ENCODE measurements at regions of chr13 and their contacts with region 1.

Region 1: DNA sequence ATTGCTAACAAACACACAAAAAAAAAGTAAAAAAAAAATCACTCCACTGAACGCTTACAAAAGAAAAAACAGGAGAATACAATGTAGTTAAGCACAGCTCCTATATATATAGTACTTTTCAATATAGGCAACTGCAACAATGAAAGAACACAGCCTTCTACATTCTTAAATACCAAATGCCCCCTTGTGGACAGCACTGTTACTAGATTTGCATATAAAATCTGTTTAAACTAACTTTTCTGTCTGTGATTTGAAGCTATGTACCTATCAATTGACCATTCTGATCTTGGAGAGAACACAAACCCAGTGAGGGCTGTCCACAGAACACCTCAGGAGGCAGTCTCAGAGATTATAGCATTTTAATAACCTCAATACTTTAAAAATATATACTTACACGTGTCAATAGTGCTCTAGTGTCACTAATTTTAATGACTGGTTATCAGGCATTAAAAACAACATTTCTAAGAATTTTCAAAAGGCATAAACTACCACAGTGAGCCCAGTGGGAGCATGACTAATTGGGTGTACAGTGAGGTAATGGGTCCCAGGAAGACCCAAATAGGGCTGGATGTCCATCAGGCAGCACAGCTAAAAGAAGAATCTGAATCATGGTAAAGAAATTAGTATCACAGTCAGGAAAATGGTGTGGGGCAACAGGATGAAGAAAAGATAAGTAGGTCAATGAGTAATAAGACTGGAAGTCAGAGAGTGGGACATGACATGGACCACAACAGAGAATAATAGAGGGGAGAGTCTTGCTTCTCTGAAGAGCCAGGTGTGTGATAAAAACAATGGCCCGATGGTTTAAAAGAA is 22.2 kb downstream of the CCDC169 start:
- DNase-seq: no peak

Region 2: GRCh38 chr13:35978603-35979316 is 296.6 kb before region 1 on chr13:
- intact Hi-C with region 1: loop called (anchors 2 to 5 kb)
- DNase-seq: no peak

Region 3: GRCh38 chr13:35984776-35985453 is 290.5 kb before region 1 on chr13:
- intact Hi-C with region 1: loop called in 1 of 2 experiments (anchors 5 kb)
- DNase-seq: no peak

Region 4: DNA sequence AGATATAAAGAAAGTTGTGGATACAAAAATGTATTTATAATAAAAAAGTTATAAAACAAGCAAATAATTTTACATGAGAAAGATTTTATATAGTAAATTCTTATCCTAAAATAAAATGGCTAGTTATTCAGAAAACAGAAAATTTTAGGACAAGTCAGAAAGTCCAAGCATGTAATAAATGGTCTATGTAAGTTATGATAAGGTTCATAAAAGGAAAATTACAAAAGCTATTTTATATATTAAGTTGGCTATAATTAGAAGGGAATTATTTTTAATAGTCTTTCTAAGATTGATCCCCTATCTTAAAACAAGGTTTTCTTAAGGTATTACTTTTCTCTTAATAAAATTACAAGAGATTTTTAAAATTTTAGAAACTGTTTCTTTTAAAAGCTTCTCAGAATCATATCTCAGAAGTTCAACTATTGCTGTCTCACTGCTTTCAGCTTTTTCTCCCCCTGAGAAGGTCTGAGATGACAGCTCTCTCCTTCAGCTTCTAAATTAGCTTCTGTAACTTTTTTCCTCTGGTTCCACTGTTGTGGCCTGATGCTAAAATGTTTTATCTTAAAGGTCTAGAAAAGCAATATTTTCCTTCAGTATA is 13.5 kb after region 1 on chr13:
- intact Hi-C with region 1: no loop called
- DNase-seq: no peak

Region 5: GRCh38 chr13:36337938-36338641 is 62.7 kb after region 1 on chr13:
- intact Hi-C with region 1: loop called in 1 of 2 experiments (anchors 2 kb)
- DNase-seq: no peak

Measured in posterior vena cava (tissue), 2 donors.